GM13976 (cell line): ENCODE measurements at regions of chr10 and their contacts with region 1.

Region 1: GRCh38 chr10:89217057-89217990 is 10.2 kb upstream of the CH25H start:
- DNase-seq: peak; percentile 41
- CTCF ChIP-seq: peak; percentile 46

Region 2: GRCh38 chr10:88835096-88835909 is 382.0 kb before region 1 on chr10:
- in situ Hi-C with region 1: loop called (anchors 10 kb)
- DNase-seq: peak; percentile 40
- CTCF ChIP-seq: peak; percentile 87

Region 3: GRCh38 chr10:88932539-88933256 is 284.6 kb before region 1 on chr10:
- in situ Hi-C with region 1: loop called (anchors 5 kb)
- DNase-seq: peak; percentile 29
- CTCF ChIP-seq: peak; percentile 89

Region 4: DNA sequence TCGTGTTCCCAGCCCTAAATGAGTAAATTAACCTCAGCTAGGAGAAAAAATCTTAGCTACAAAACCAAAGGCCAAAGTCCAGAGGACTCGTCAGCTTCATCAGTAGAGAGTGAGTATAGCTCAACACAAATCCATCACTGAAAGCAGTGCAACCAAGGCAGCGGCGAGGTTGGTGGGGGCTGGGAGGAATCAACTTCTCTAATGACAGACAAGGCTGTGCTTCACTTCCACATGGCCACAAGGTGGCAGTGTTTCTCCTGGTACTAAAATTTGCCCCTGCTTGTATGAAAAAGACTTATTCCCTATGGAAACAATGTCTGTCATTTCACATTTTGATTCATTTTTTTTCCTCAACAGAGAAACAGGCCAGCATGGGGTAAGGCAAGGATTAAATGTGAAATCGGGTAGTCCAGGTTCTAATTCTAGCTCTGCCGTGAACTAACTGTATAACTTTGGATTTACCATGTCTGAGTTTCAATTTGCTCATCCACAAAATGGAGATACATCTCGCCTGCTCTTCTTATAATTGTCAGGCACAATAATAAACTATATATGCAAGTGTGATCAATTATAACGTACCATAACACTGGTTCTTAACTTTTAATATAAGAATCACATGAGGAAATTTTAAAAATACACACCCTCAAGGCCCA is 187.4 kb before region 1 on chr10:
- in situ Hi-C with region 1: loop called (anchors 5 kb)
- DNase-seq: peak; percentile 34
- CTCF ChIP-seq: peak; percentile 74

Region 5: GRCh38 chr10:89625041-89625765 is 407.9 kb after region 1 on chr10:
- in situ Hi-C with region 1: no loop called
- DNase-seq: no peak
- CTCF ChIP-seq: no peak